ENCODE measurements at regions of chr13 and their contacts with region 1.

Region 1: DNA sequence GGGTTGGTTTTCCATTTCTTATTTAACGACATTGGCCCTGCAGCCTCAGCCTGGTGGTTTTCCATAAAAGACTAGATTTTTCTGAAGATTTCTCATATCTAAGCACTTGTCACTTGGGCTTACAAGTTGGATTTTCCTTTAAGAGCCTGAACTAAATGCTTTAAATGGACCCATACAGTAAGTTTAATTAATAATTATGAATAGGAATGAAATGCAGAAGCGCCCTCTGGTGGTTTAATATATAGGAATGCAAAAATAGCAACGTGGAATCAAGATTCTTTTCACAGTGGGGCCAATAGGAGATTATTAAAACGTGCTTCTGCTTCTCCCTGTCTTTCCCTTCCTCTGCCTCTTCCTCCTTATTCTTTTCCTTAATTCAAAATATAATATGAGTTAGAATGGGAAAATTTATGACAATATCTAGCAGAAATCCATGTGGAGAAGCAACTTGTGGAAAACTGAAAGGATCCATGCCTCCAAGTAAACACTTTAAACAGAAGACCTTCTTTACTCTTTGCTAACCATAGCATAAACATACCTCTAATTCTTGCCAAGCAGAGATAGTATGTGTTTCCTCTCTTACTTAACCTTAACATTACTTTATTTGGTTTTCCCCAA is 324.0 kb downstream of the GPC5 start:
- DNase-seq: peak; percentile 2
- H3K4me3 ChIP-seq: no peak overlapping the region
- H3K27ac ChIP-seq: no peak overlapping the region
- H3K4me1 ChIP-seq: no peaks in the 10 kb centered on the region
- H3K27me3 ChIP-seq: no peaks in the 10 kb centered on the region
- CTCF ChIP-seq: peak; percentile 39 to 54

Region 2: DNA sequence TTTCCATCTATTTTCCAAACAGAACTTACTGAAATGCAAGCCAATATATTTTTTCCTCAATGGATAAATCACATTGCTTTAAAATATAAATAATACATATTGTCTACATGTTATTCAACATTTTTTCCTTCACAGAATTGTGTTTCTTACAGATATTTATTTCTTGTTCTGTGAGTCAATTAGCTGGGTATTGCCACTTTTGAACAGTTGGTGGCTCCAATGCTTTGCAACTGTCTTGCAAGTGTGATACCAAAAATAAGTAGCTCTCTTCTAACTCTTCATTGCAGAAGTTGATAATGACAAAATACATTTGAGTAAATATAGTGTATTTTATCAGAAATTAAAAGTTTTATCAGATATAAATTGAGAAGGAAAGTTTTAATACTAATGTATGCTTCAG is 341.0 kb before region 1 on chr13:
- CTCF ChIA-PET with region 1: no interaction called
- dilution Hi-C with region 1: no loop called
- in situ Hi-C with region 1: loop called (anchors 10 kb)
- intact Hi-C with region 1: no loop called
- DNase-seq: no peak
- H3K4me3 ChIP-seq: no peak overlapping the region
- H3K27ac ChIP-seq: no peak overlapping the region
- H3K4me1 ChIP-seq: no peaks in the 10 kb centered on the region
- H3K27me3 ChIP-seq: no peaks in the 10 kb centered on the region
- CTCF ChIP-seq: peak; percentile 21 to 55

Region 3: GRCh38 chr13:91592056-91593014 is 130.0 kb before region 1 on chr13:
- CTCF ChIA-PET with region 1: no interaction called
- dilution Hi-C with region 1: no loop called
- in situ Hi-C with region 1: no loop called
- intact Hi-C with region 1: loop called (anchors 1 kb)
- DNase-seq: no peak
- H3K4me3 ChIP-seq: no peak overlapping the region
- H3K27ac ChIP-seq: no peak overlapping the region
- H3K4me1 ChIP-seq: no peaks in the 10 kb centered on the region
- H3K27me3 ChIP-seq: no peaks in the 10 kb centered on the region
- CTCF ChIP-seq: peak in 1 of 2 donors; percentile 24